H1 (cell line): ENCODE measurements at regions of chr7 and their contacts with region 1.

Region 1: DNA sequence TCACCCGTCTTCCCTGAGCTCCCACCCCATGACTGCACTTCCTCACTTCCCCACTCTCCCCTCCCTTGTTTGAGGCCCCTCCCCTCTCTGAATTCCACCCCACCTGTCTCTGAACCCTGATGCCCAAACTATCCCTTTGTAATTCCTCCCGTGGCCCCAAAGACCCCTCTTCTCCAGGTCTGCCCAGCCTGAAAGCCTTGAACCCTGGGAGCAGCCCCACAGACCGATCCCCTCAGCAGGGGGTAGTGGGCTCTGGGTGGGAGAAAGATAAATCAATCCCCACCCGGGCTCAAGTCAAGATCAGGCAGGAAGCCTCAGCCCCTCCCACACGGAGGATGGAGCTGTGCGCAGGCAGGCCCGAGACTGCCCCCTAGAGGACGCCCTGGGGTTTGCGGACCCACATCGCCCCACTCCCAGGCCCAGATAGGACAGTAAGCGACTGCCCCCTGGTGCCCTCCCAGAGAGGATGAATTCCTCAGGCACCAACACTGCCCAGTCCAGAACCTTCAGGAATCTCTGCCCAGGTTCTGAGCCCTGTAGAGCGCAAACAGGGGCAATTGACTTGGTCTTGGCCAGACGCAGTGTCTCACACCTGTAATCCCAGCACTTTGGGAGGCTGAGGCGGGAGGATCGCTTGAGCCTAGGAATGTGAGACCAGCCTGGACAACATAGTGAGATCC is 11.7 kb downstream of the HSPB1 start:
- DNase-seq: peak; percentile 95 to 100
- H3K4me3 ChIP-seq: peak overlapping the region in 3 of 4 experiments; percentile 34 to 62 (median 49); a peak in 5 of 8 replicates
- H3K27ac ChIP-seq: no peak overlapping the region
- H3K4me1 ChIP-seq: peaks cover 0 to 14% (median 7%) of the 10 kb centered on the region in 4 experiments; a peak in 6 of 7 replicates
- H3K27me3 ChIP-seq: no peaks in the 10 kb centered on the region
- CTCF ChIP-seq: peak; percentile 99 to 100 (median 100)
- EP300 ChIP-seq: no peak
- POLR2A ChIP-seq: no peak
- RAD21 ChIP-seq: peak; percentile 99 to 100

Region 2: DNA sequence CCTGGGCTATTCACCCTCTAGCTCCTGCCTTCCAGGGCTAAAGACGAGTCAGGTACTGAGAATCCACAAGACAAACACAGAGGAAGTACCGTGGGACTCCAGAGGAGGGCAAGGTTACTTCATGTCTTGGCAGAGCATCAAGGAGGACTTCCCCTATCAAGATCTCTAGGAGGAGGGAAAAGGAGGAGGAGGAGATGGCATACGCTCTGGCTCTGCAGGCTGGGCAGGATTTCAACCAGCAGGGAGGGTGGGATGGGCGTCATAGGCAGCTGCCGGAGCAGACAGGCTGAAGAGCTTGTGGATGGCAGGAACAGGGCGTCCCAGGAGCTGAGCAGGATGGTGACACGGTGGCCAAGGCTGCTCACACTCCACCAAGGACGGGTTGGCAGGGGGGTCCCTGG is 244.9 kb before region 1 on chr7:
- CTCF ChIA-PET with region 1: interaction called, 14 read pairs
- POLR2A ChIA-PET with region 1: interaction called, 3 read pairs
- DNase-seq: peak in 1 of 2 experiments; percentile 46
- H3K4me3 ChIP-seq: no peak overlapping the region
- H3K27ac ChIP-seq: no peak overlapping the region
- H3K4me1 ChIP-seq: peaks cover 0 to 3% (median 1%) of the 10 kb centered on the region in 4 experiments; a peak in 5 of 7 replicates
- H3K27me3 ChIP-seq: no peaks in the 10 kb centered on the region
- CTCF ChIP-seq: peak; percentile 32 to 69 (median 67)
- EP300 ChIP-seq: no peak
- POLR2A ChIP-seq: no peak
- RAD21 ChIP-seq: peak; percentile 84

Region 3: GRCh38 chr7:76185187-76185896 is 128.8 kb before region 1 on chr7:
- CTCF ChIA-PET with region 1: interaction called, 13 read pairs
- POLR2A ChIA-PET with region 1: interaction called, 4 read pairs
- DNase-seq: peak in 1 of 2 experiments; percentile 75
- H3K4me3 ChIP-seq: no peak overlapping the region; a peak in 1 of 8 replicates
- H3K27ac ChIP-seq: peak overlapping the region; percentile 56; the same call in 1 of the 2 replicates
- H3K4me1 ChIP-seq: peaks cover 0 to 11% (median 8%) of the 10 kb centered on the region in 4 experiments; a peak in 6 of 7 replicates
- H3K27me3 ChIP-seq: no peaks in the 10 kb centered on the region
- CTCF ChIP-seq: no peak
- EP300 ChIP-seq: no peak
- POLR2A ChIP-seq: no peak; a peak in 1 of 3 replicates
- RAD21 ChIP-seq: no peak

Region 4: DNA sequence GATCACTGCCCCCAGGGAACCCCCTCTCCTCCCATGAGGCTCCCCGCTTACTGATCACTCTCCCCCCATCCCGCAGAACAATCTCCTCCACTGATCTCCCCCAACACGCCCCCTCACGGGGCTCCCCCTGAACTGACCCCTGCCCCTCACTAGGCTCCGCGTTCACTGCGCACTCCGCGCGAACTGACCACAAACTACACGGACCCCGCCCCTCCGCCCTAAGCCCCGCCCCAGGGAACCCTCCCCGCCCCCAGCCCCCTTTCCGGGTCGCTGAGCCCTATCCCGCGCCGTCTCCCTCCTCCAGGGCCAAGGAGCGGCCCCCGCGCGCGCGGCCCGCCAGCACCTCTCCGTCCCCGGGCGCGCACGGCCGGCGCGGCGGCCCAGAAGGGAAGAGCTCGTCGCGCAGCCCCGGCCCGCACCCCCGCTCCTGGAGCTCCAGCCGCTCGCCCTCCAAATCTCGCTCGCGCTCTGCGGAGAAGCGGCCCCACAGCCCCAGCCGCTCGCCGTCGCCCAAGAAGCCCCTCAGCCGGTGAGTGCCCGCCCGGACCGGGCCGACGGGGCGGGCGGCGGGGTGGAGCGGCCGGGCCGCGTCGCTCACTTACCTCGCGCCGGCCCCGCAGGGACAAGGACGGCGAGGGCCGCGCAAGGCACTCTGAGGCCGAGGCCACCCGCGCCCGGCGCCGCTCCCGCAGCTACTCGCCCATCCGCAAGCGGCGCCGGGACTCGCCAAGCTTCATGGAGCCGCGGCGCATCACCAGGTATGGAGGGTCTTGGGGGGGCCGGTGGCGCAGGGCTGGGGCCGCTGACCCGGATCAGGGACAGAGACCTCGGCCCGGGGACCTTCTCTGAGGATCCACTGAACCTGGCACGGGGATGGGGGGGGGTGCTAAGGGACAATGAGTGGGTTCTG is 31.6 kb before region 1 on chr7:
- CTCF ChIA-PET with region 1: interaction called, 426 read pairs
- POLR2A ChIA-PET with region 1: interaction called, 19 read pairs
- DNase-seq: peak in 1 of 2 experiments; percentile 84
- H3K4me3 ChIP-seq: peak overlapping the region; percentile 49 to 95 (median 58)
- H3K27ac ChIP-seq: no peak overlapping the region
- H3K4me1 ChIP-seq: peaks cover 0 to 13% (median 7%) of the 10 kb centered on the region in 4 experiments; a peak in 5 of 7 replicates
- H3K27me3 ChIP-seq: peaks cover 8 to 31% (median 17%) of the 10 kb centered on the region in 4 experiments
- CTCF ChIP-seq: no peak
- EP300 ChIP-seq: no peak
- POLR2A ChIP-seq: no peak
- RAD21 ChIP-seq: no peak

Region 5: DNA sequence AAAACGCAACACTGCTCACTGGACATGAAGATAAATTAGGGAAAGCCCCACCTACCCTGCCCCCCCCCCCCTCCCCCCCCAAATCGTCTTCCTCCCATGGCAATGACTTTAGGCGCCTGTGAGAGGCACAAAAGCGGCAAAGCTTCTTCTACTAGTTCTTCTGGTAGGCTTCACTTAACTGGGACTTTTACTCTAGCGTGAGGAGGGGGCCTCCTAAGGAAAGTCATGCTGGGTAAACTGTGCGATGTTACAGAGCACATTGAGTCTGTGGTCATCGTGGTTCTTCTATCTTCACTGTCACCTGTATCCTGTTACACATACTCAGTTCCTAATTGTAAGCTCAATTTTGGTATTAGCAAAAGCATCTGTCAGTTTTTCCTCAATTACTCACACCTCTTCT is 13.4 kb after region 1 on chr7:
- CTCF ChIA-PET with region 1: interaction called, 6 read pairs
- POLR2A ChIA-PET with region 1: interaction called, 14 read pairs
- DNase-seq: no peak
- H3K4me3 ChIP-seq: no peak overlapping the region
- H3K27ac ChIP-seq: no peak overlapping the region
- H3K4me1 ChIP-seq: peaks cover 0 to 2% (median 0%) of the 10 kb centered on the region in 4 experiments; a peak in 1 of 7 replicates
- H3K27me3 ChIP-seq: no peaks in the 10 kb centered on the region
- CTCF ChIP-seq: no peak
- EP300 ChIP-seq: no peak
- POLR2A ChIP-seq: no peak
- RAD21 ChIP-seq: no peak

Region 6: GRCh38 chr7:76359111-76359978 is 45.2 kb after region 1 on chr7:
- CTCF ChIA-PET with region 1: interaction called, 5 read pairs
- POLR2A ChIA-PET with region 1: interaction called, 13 read pairs
- DNase-seq: peak; percentile 93
- H3K4me3 ChIP-seq: peak overlapping the region; percentile 89 to 99 (median 92)
- H3K27ac ChIP-seq: peak overlapping the region; percentile 99
- H3K4me1 ChIP-seq: peaks cover 4 to 11% (median 6%) of the 10 kb centered on the region in 4 experiments
- H3K27me3 ChIP-seq: no peaks in the 10 kb centered on the region
- CTCF ChIP-seq: peak; percentile 51 to 63 (median 60)
- EP300 ChIP-seq: no peak
- POLR2A ChIP-seq: peak; percentile 26 to 34
- RAD21 ChIP-seq: peak; percentile 44 to 49; a peak in 3 of 4 replicates